B cell (primary cell): ENCODE measurements at regions of chr12 and their contacts with region 1.

Region 1: DNA sequence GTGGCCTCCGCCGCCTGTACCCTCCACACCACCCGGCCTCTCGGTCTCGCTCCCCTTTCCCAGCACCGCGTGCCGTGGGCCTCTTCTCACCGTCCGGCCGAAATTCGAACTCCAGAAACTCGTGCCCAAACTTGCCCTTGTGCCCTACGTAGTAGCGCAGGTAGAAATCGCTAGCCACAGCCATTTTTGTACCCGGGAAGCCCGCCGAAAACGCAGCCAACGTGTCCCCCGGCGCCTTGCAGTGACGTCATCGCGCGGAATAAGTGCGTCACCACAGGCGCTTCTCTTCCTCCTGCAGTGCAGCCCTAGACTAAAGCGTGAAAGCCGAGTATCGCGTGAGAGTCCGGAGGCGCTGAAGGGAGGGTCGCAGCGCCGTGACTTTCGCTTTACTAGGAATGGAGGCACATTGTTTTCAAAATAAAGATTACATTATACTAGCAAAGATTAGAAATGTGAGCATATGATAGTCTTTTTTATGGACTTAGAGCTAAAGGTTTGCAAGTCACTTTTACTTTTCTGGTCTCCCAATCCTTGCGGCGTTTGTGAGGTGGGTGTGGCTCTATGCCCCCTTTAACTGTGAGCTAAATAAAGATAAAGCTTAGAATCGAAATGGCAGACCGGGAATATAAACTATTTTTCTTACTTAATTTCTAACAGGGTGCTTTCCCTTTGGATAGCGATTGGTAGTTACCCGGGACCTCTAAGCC is at the start of gene MAGOHB:
- DNase-seq: peak; percentile 98
- ATAC-seq: peak; percentile 96
- H3K4me3 ChIP-seq: peak within 1 kb of the TSS; percentile 71 to 99 (median 88)
- H3K4me3 Mint-ChIP-seq: peak within 1 kb of the TSS; percentile 99
- H3K27ac ChIP-seq: peak within 1 kb of the TSS; percentile 85 to 96
- H3K27ac Mint-ChIP-seq: peak within 1 kb of the TSS; percentile 100
- H3K4me1 ChIP-seq: peaks cover 11 to 19% of the 10 kb centered on the region in 2 donors
- H3K4me1 Mint-ChIP-seq: peaks cover 23% of the 10 kb centered on the region
- H3K27me3 ChIP-seq: no peaks in the 10 kb centered on the region
- H3K27me3 Mint-ChIP-seq: peaks cover 10% of the 10 kb centered on the region
- CTCF ChIP-seq: no peak
- total RNA-seq, gene MAGOHB: 16.0 and 19.1 TPM in 2 replicates

Region 2: DNA sequence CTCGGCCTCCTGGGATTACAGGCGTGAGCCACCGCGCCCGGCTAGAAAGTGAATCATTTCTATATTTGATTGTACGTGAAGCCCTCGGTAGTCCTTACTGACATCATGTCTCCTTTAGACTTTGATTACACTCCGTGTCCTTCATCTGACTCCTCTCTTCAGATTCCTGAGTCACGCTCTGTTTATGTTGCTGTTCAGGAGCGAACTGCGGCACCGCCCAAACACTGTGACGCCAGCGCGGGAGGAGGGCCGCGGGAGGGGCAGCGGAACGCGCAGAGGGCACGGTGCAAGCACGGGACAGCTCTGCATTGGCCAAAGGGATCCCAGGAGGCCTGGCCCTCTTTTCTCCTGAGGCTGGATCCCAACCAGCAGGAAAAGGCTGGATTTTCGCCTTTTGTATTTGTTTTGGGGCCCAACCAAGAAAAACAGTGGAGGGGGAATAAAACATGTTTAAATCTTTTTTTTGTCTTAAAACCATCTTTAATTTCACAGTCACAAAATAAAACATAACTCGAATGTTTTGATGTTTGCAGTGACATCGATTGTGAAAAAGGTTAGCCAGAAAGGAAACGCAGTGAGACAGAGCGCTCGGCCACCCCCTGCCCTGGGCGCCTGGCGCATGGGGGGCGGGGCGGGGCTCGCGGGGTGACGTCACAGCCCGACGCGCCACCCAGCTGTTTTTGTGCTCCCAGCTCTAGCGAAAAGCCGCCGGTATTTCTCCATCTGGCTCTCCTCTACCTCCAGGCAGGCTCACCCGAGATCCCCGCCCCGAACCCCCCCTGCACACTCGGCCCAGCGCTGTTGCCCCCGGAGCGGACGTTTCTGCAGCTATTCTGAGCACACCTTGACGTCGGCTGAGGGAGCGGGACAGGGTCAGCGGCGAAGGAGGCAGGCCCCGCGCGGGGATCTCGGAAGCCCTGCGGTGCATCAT is 401.0 kb before region 1 on chr12 and contains the start of gene GABARAPL1:
- CTCF ChIA-PET with region 1: no interaction called
- POLR2A ChIA-PET with region 1: no interaction called
- intact Hi-C with region 1: loop called (anchors 1 kb)
- DNase-seq: peak; percentile 86
- ATAC-seq: peak; percentile 80
- H3K4me3 ChIP-seq: peak within 1 kb of the TSS; percentile 66 to 84 (median 82)
- H3K4me3 Mint-ChIP-seq: peak within 1 kb of the TSS; percentile 95
- H3K27ac ChIP-seq: peak within 1 kb of the TSS; percentile 25 to 28
- H3K27ac Mint-ChIP-seq: peak within 1 kb of the TSS; percentile 86
- H3K4me1 ChIP-seq: peaks cover 13 to 18% of the 10 kb centered on the region in 2 donors
- H3K4me1 Mint-ChIP-seq: peaks cover 19% of the 10 kb centered on the region
- H3K27me3 ChIP-seq: peaks cover 0 to 36% (median 20%) of the 10 kb centered on the region in 4 experiments
- H3K27me3 Mint-ChIP-seq: peaks cover 29% of the 10 kb centered on the region
- CTCF ChIP-seq: no peak
- total RNA-seq, gene GABARAPL1: 11.9 and 12.0 TPM in 2 replicates

Region 3: GRCh38 chr12:10673660-10674384 is 60.3 kb after region 1 on chr12 and contains the start of gene STYK1:
- CTCF ChIA-PET with region 1: interaction called, 3 read pairs
- POLR2A ChIA-PET with region 1: no interaction called
- intact Hi-C with region 1: loop called (anchors 5 kb)
- DNase-seq: peak; percentile 65
- ATAC-seq: peak; percentile 36
- H3K4me3 ChIP-seq: peak within 1 kb of the TSS; percentile 15 to 49 (median 41)
- H3K4me3 Mint-ChIP-seq: peak within 1 kb of the TSS; percentile 79
- H3K27ac ChIP-seq: no peak within 1 kb of the TSS
- H3K27ac Mint-ChIP-seq: no peak within 1 kb of the TSS
- H3K4me1 ChIP-seq: peaks cover 16 to 30% of the 10 kb centered on the region in 2 donors
- H3K4me1 Mint-ChIP-seq: peaks cover 21% of the 10 kb centered on the region
- H3K27me3 ChIP-seq: peaks cover 0 to 19% (median 14%) of the 10 kb centered on the region in 4 experiments
- H3K27me3 Mint-ChIP-seq: peaks cover 52% of the 10 kb centered on the region
- CTCF ChIP-seq: peak; percentile 78
- total RNA-seq, gene STYK1: not detected in 2 replicates

Region 4: GRCh38 chr12:10749700-10750384 is 136.3 kb after region 1 on chr12:
- CTCF ChIA-PET with region 1: no interaction called
- POLR2A ChIA-PET with region 1: no interaction called
- intact Hi-C with region 1: loop called (anchors 5 kb)
- DNase-seq: peak; percentile 85
- ATAC-seq: peak; percentile 98
- H3K4me3 ChIP-seq: peak overlapping the region in 3 of 5 experiments; percentile 31 to 41 (median 34)
- H3K4me3 Mint-ChIP-seq: peak overlapping the region; percentile 72
- H3K27ac ChIP-seq: no peak overlapping the region
- H3K27ac Mint-ChIP-seq: no peak overlapping the region
- H3K4me1 ChIP-seq: peaks cover 5 to 9% of the 10 kb centered on the region in 2 donors
- H3K4me1 Mint-ChIP-seq: peaks cover 9% of the 10 kb centered on the region
- H3K27me3 ChIP-seq: peaks cover 0 to 5% (median 2%) of the 10 kb centered on the region in 4 experiments
- H3K27me3 Mint-ChIP-seq: peaks cover 32% of the 10 kb centered on the region
- CTCF ChIP-seq: peak; percentile 90

Region 5: GRCh38 chr12:11836282-11837151 is 1223.0 kb after region 1 on chr12:
- CTCF ChIA-PET with region 1: no interaction called
- POLR2A ChIA-PET with region 1: no interaction called
- intact Hi-C with region 1: loop called (anchors 5 kb)
- DNase-seq: peak; percentile 93
- ATAC-seq: peak; percentile 96
- H3K4me3 ChIP-seq: peak overlapping the region in 2 of 5 experiments; percentile 6 to 37
- H3K4me3 Mint-ChIP-seq: peak overlapping the region; percentile 64
- H3K27ac ChIP-seq: peak overlapping the region; percentile 74 to 77
- H3K27ac Mint-ChIP-seq: peak overlapping the region; percentile 92
- H3K4me1 ChIP-seq: peaks cover 37 to 53% of the 10 kb centered on the region in 2 donors
- H3K4me1 Mint-ChIP-seq: peaks cover 67% of the 10 kb centered on the region
- H3K27me3 ChIP-seq: no peaks in the 10 kb centered on the region
- H3K27me3 Mint-ChIP-seq: no peaks in the 10 kb centered on the region
- CTCF ChIP-seq: no peak